ENCODE measurements at regions of chr16 and their contacts with region 1.

Region 1: DNA sequence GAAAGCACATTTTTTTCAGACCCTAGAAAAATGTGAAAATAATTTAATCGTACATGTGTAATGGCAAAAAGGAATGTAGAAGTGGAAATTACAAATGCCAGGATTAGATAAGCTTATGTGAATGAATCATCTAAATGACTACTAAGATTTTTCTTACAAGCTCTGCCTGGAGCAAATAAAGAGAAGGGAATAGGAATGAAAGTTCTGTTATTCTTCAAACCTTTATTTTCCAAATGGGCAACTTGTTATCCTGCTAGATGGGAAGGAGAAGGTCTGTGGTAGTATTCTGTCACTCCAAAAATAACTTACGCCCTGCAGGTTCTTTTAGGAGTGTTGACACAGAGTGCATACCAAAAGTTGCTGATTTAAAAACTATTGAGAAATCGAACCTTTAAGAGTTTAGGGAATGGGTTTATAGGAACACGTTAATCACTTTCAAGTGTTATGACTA is 9.7 kb downstream of the CTCF start:
- DNase-seq: no peak
- ATAC-seq: peak in 1 of 2 donors; percentile 63

Region 2: DNA sequence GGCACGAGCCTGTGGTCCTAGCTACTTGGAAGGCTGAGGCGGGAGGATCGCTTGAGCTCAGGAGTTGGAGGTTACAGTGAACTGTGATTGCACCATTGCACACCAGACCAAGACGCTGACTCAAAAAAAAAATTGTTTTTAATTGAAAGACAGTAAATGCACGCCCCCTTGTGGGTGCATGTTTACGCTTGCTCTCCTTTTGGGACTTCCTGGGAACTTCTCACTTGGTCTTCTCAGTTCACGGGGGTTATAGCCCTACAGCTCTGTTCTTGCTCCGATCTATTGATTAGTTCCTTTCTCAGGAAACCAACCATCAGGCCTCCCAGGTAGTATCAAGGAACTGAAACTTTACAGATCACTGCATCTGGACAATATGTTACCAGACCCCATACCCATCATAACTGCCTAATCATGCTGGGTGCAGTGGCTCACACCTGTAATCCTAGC is 57.6 kb before region 1 on chr16:
- intact Hi-C with region 1: no loop called
- DNase-seq: peak; percentile 88
- ATAC-seq: peak; percentile 65 to 68

Region 3: GRCh38 chr16:67632415-67633172 is 60.6 kb after region 1 on chr16:
- intact Hi-C with region 1: no loop called
- DNase-seq: no peak
- ATAC-seq: peak in 1 of 2 donors; percentile 58

Region 4: GRCh38 chr16:67659648-67660563 is 87.9 kb after region 1 on chr16 and contains the start of gene ACD:
- intact Hi-C with region 1: loop called in 1 of 2 experiments (anchors 5 kb)
- DNase-seq: peak; percentile 91
- ATAC-seq: peak; percentile 92 to 93
- total RNA-seq, gene ACD: 9.0 to 10.2 TPM

Measured in left cardiac atrium (tissue), 4 donors.